ENCODE measurements at regions of chr6 and their contacts with region 1.

Region 1: DNA sequence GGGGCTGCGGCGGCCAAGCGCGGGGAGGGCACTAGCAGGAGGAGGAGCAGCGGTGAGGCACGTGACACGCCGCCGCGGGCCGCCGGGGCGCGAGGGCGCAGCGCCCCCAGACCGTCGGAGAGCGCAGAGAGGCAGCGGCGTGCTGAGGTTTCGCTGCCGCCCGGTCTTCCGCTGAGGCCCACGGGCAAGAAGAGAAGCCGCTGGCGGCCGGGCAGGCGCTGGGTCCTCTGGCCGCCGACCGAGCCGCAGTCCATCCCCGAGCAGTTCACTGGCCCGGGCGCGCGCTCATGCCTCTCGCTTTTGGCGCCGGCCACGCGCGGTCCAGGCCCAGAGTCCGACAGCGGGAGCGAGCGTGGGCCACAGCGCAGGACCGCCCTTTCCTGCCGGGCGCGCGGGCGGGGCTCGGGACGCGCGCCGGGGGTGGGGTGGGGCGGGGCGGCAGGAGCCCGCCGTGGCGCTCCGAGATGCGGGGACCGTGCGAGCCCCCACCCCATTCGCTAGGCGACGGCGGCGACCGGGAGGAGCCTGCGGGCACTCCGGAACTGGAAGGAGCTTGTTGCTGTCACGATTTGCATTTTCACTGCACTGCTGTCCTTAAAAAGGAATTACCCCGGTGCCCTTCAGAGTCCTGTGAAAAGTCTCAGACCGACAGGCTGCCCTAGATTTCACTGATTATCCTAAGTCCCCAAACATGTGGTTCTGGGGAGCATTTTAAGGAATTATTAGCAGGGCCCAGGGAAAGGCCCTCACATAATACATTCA is at the start of gene MCUR1:
- DNase-seq: peak; percentile 63 to 89
- H3K4me3 ChIP-seq: peak within 1 kb of the TSS; percentile 57
- H3K27ac ChIP-seq: peak within 1 kb of the TSS; percentile 66
- H3K4me1 ChIP-seq: peaks cover 34% of the 10 kb centered on the region
- H3K27me3 ChIP-seq: no peaks in the 10 kb centered on the region
- CTCF ChIP-seq: no peak
- total RNA-seq, gene MCUR1: 38.8 and 45.9 TPM in 2 replicates

Region 2: DNA sequence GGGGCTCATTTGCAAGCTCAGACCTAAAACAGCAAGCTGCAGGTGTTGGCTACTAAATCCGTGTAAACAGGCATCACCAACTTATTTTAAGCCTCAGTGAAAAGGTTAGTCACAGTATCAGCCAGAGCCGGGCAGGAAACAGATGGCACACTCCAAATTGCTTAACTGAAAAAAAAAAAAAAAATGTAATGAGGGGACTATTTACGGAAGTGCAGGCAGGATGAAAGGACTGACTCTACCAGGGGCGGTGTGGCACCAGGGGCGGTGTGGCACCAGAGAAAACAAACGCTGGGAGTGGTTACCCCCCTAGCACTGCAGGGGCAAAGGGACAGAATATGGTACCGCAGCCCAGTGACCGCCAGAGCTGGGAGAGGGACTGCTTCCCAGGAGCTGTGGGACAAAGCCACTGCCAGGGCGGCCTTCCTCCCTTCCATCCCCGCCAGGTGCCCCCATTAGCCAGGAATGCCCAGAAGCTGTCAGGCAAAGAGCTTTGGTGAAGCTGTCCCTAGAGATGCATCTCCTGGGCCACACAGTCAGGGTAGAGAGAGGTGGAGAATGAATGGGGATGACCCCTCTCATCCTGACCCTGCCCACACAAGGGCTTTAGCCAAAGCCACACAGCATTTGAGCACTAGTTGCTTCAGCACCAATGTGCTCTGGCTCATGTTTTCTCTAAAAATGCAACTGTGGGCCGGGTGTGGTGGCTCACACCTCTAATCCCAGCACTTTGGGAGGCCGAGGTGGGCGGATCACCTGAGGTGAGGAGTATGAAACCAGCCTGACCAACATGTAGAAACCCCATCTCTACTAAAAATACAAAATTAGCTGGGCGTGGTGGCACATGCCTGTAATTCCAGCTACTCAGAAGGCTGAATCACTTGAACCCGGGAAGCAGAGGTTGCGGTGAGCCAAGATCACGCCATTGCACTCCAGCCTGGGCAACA is 287.4 kb before region 1 on chr6:
- CTCF ChIA-PET with region 1: no interaction called
- POLR2A ChIA-PET with region 1: interaction called, 44 read pairs
- intact Hi-C with region 1: no loop called
- DNase-seq: no peak
- H3K4me3 ChIP-seq: no peak overlapping the region
- H3K27ac ChIP-seq: no peak overlapping the region
- H3K4me1 ChIP-seq: peaks cover 20% of the 10 kb centered on the region
- H3K27me3 ChIP-seq: no peaks in the 10 kb centered on the region
- CTCF ChIP-seq: no peak

Region 3: DNA sequence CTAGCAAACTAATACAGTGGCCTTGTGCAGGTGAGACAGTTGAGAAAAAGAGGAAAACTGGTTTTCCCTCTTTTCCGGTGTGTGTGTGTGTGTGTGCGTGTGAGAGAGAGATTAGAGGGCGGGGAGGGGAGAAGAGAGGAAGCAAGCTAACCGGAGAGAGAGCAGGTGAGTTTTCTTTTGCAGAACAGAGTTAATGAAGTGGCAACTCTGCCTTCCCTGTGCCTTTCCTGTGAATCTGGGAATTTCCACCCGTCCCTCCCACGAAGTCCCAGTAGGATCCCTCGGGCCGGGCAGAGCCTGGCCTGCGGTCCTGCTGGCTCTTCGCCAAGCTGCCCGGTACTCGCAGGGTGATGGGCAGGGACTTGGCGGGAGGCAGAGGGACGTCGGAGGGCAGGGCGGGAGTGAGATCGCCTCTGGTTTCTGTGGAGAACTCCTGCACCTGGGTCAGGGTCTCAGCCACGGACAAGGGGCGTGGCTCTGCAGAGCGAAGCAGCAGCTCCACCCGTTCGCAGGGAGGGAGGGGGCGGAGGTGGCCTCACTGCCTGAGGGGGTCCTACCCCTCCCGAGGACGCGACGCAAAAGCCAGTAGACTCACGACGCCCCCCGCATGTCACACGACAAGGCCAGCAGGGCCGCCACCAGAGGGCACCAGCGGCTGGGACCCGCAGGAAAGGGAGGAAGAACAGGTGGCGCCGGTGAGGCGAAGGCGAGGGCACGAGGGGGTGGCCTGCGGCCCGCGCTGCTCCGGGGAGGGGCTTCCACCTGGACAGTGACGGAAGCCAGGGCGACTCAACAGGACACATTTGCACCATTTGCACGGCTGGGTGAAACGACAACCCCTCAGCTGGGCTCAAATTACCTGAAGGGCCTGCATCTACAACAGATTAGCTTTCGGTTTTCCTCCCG is 59.2 kb after region 1 on chr6:
- CTCF ChIA-PET with region 1: no interaction called
- POLR2A ChIA-PET with region 1: no interaction called
- intact Hi-C with region 1: loop called (anchors 1 kb)
- DNase-seq: peak; percentile 72 to 91
- H3K4me3 ChIP-seq: peak overlapping the region; percentile 60
- H3K27ac ChIP-seq: peak overlapping the region; percentile 67
- H3K4me1 ChIP-seq: peaks cover 20% of the 10 kb centered on the region
- H3K27me3 ChIP-seq: no peaks in the 10 kb centered on the region
- CTCF ChIP-seq: peak; percentile 89

Region 4: DNA sequence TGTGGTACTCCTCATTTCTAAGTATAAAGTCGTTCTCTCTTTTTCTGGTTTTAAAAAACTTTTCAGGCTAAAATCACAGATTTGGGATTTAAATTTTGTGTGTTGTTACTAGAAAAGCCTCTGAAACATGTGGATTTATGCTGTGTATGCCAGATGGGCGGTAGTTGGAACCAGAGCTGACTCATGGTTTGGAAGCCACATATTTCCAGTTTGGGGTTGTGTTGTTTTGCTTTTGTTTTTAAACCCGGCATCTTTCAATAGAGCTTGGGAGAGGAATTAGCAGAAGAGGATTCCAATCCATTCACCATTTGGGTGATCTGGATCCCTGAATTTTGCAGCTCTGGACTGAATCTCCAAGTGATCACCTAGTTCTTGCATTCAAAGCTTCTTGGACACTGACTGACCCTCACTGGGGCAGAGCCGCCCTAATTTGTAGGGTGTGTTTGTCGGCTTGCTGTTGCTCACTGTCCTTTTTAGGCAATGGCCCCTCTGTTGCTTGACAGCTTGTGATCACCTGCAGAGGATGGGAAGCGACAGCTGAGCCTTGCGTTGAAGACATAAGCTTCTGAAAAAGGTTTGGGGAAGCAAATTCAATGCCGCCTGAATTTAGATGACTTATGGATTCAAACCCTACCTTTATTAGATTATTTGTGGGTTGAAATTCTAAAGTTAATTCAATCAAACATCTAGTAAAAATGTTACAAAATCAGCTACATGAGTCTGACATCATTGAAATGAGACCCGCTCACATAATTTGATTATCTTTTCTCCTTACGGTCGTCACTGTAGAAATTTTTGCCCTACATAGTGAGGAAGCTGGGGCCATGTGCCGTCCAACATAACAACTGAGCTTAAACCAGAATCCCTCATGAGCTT is 223.3 kb after region 1 on chr6:
- CTCF ChIA-PET with region 1: no interaction called
- POLR2A ChIA-PET with region 1: no interaction called
- intact Hi-C with region 1: no loop called
- DNase-seq: no peak
- H3K4me3 ChIP-seq: no peak overlapping the region
- H3K27ac ChIP-seq: no peak overlapping the region
- H3K4me1 ChIP-seq: no peaks in the 10 kb centered on the region
- H3K27me3 ChIP-seq: no peaks in the 10 kb centered on the region
- CTCF ChIP-seq: no peak

Region 5: GRCh38 chr6:14095437-14095836 is 281.1 kb after region 1 on chr6:
- CTCF ChIA-PET with region 1: no interaction called
- POLR2A ChIA-PET with region 1: no interaction called
- intact Hi-C with region 1: no loop called
- DNase-seq: no peak
- H3K4me3 ChIP-seq: no peak overlapping the region
- H3K27ac ChIP-seq: no peak overlapping the region
- H3K4me1 ChIP-seq: no peaks in the 10 kb centered on the region
- H3K27me3 ChIP-seq: no peaks in the 10 kb centered on the region
- CTCF ChIP-seq: no peak

Measured in PC-9 (cell line).